Lower lobe of right lung (tissue), 2 donors: ENCODE measurements at regions of chr3 and their contacts with region 1.

Region 1: GRCh38 chr3:69691860-69692259 is 47.4 kb upstream of the MITF start:
- DNase-seq: no peak
- ATAC-seq: peak in 1 of 2 donors; percentile 38
- H3K4me3 ChIP-seq: no peak overlapping the region
- H3K27ac ChIP-seq: no peak overlapping the region
- H3K4me1 ChIP-seq: no peaks in the 10 kb centered on the region
- H3K27me3 ChIP-seq: no peaks in the 10 kb centered on the region
- CTCF ChIP-seq: no peak

Region 2: DNA sequence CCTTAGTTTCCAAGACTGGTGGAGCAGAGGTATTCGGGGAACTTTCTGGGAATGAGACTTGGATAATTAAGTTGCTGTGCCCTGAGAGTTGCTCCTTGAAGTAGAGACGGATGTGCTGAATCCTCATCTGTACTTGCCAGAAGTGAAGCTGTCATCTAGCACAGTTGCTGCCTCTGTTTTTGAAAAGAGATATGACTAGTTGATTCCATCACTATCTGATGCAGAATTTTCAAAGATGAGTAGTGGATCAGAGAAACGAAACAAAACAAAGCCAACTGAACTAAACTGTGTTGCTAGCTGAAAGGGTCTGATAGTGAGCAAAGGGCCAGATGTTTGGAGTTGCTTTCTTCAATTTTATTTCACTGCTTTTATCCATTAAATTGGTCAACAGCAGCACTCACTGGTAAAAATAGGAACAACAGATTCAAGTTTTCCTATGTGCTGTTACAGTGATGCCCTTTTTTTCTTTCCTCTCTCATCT is 100.1 kb after region 1 on chr3:
- intact Hi-C with region 1: loop called (anchors 10 kb)
- DNase-seq: no peak
- ATAC-seq: peak; percentile 44 to 64
- H3K4me3 ChIP-seq: no peak overlapping the region
- H3K27ac ChIP-seq: peak overlapping the region; percentile 5
- H3K4me1 ChIP-seq: peaks cover 39% of the 10 kb centered on the region
- H3K27me3 ChIP-seq: no peaks in the 10 kb centered on the region
- CTCF ChIP-seq: peak; percentile 45

Region 3: DNA sequence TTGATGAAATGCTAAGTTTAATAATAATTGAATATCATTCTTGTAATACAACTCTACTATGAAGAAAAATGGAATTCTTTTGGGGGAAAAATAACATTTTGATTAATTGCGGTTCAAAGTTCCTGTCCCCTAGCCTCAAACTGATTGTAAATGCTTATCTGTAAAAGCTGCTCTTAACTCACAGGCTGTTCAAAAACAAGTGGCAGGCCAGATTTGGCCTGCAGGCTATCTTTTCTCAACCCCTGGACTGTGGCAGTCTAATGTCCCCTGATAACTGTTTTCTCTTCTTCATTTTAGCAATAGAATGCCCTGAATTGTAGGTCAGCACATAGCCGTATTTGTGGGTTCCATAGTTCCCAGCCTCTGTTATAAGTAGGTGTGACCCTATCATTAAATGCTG is 284.2 kb after region 1 on chr3:
- intact Hi-C with region 1: no loop called
- DNase-seq: no peak
- ATAC-seq: no peak
- H3K4me3 ChIP-seq: no peak overlapping the region
- H3K27ac ChIP-seq: no peak overlapping the region
- H3K4me1 ChIP-seq: no peaks in the 10 kb centered on the region
- H3K27me3 ChIP-seq: no peaks in the 10 kb centered on the region
- CTCF ChIP-seq: no peak

Region 4: GRCh38 chr3:70064194-70064779 is 372.4 kb after region 1 on chr3:
- intact Hi-C with region 1: no loop called
- DNase-seq: no peak
- ATAC-seq: peak in 1 of 2 donors; percentile 47
- H3K4me3 ChIP-seq: no peak overlapping the region
- H3K27ac ChIP-seq: no peak overlapping the region
- H3K4me1 ChIP-seq: no peaks in the 10 kb centered on the region
- H3K27me3 ChIP-seq: no peaks in the 10 kb centered on the region
- CTCF ChIP-seq: peak; percentile 66